ENCODE measurements at regions of chr22 and their contacts with region 1.

Region 1: DNA sequence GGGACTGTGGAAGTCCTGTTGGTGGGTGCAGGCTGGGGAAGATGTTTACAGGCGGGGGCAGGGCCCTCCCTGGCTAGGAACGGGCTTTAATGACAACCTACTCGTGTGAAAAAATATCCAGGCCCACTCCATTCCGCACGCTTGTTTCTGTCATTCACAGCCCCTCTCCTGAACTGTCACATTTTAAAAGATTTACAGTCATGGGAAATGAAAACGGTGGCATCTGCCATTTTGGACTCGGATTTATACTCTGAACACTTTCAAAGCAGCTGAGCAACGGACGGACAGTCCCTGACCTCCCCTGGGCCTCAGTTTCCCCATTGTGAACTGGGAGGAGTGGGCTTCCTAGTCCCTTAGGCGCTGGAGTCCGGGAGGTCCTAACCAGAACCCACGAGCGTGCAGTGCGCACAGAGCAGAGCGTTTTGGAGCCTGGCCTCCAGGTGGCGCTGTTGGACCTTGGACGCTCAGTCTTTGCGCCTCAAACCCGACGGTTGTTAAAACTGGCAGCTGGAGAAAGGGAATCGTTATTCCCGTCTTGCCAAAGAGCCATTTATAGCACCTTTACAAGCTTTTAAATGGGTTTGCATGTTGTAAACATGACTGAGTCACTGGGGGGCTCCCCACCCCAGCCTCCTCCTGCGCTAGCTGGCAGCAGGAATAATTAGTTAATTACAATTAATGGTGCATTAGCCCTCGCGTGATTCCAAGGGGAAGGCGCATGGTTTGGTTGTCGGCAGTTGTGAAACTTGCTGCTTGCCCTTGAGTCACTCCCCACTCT is 75.3 kb downstream of the FBLN1 start:
- DNase-seq: peak; percentile 93
- ATAC-seq: peak; percentile 80

Region 2: GRCh38 chr22:44505796-44506354 is 1072.1 kb before region 1 on chr22:
- intact Hi-C with region 1: loop called (anchors 5 kb)
- DNase-seq: no peak
- ATAC-seq: no peak